Prostate gland (tissue), 2 donors: ENCODE measurements at regions of chr10 and their contacts with region 1.

Region 1: DNA sequence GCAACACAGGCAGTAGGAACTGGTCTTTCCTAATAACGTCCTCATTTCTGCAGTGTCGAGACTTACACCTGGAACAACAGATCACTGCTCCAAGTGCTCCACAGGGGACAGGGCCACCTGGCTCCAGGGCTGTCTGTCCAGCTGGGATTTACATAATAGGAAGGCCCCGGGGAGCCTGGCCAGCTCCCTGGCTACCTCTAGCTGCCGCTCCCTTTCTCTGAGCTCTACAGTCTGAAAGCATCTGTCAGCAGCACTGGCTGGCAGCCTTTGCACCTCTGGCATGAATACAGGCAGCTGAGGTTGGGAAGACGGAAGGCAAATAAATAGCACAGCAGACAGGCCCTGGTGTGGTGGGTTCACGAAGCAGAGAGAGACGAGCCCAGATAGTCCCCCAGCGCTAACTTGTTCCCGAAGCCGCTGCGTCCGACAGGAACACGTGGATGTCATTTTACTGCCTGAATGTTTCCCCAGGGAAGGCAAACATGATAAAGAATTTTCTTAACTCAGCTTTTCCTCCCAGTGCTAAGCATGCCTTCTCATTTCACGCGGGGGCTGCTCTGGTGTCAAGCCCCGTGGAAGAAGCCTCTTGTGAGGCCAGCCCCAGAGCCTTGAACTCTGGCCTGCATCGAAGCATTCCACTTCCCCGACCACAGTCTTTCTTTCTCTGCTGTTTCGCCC is 105.4 kb downstream of the ITIH5 start:
- DNase-seq: peak; percentile 56
- H3K4me3 ChIP-seq: no peak overlapping the region
- H3K27ac ChIP-seq: peak overlapping the region; percentile 15 to 52
- H3K4me1 ChIP-seq: peaks cover 5% of the 10 kb centered on the region
- H3K27me3 ChIP-seq: no peaks in the 10 kb centered on the region
- CTCF ChIP-seq: peak in 1 of 4 experiments; percentile 11
- POLR2A ChIP-seq: no peak

Region 2: GRCh38 chr10:7471720-7472367 is 89.5 kb before region 1 on chr10:
- intact Hi-C with region 1: no loop called
- DNase-seq: no peak
- H3K4me3 ChIP-seq: no peak overlapping the region
- H3K27ac ChIP-seq: no peak overlapping the region
- H3K4me1 ChIP-seq: no peaks in the 10 kb centered on the region
- H3K27me3 ChIP-seq: no peaks in the 10 kb centered on the region
- CTCF ChIP-seq: no peak
- POLR2A ChIP-seq: no peak

Region 3: DNA sequence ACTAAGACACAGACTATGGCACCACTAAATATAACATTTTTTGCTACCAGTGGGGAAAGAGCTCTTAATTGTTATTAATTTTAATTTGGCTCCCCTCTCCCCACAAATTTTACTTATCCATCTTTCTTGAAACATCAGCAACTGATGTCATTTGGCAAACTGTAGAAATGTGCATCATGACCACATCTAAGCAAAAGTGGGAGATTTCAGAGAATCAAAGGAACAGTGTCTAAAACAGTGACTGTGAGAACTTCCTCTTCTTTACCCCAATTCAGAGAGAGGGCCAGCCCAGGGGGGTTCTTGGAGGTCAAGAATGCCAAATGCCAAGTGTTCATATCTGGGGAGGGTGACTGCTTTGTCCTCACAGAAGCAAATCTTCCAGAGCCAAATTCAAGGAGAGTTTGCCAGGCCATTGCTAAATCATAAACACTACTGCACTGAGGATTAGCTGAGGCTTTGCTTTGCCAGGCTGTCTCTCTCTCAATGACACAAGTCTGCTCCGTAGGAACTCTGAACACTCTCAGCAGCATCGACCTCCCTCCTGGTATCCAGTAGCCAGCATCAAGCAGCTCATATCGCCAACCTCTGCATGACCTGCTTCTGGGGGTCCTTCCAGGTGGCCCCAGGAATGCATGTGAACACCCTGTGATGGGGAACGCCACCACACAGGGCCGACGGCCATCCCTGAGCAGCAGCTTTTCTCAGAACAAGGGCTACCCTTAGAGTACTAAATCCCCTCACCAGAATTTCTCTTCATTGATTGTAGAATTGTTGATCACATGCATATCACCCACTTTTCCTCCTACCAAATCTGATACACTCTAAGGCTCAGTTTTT is 39.9 kb after region 1 on chr10:
- intact Hi-C with region 1: loop called (anchors 5 kb)
- DNase-seq: no peak
- H3K4me3 ChIP-seq: no peak overlapping the region
- H3K27ac ChIP-seq: no peak overlapping the region
- H3K4me1 ChIP-seq: no peaks in the 10 kb centered on the region
- H3K27me3 ChIP-seq: no peaks in the 10 kb centered on the region
- CTCF ChIP-seq: no peak
- POLR2A ChIP-seq: no peak

Region 4: GRCh38 chr10:7756360-7756992 is 195.1 kb after region 1 on chr10:
- intact Hi-C with region 1: no loop called
- DNase-seq: no peak
- H3K4me3 ChIP-seq: no peak overlapping the region
- H3K27ac ChIP-seq: no peak overlapping the region
- H3K4me1 ChIP-seq: no peaks in the 10 kb centered on the region
- H3K27me3 ChIP-seq: no peaks in the 10 kb centered on the region
- CTCF ChIP-seq: peak in 2 of 4 experiments; percentile 18 to 28
- POLR2A ChIP-seq: no peak